ENCODE measurements at regions of chr3 and their contacts with region 1.

Region 1: DNA sequence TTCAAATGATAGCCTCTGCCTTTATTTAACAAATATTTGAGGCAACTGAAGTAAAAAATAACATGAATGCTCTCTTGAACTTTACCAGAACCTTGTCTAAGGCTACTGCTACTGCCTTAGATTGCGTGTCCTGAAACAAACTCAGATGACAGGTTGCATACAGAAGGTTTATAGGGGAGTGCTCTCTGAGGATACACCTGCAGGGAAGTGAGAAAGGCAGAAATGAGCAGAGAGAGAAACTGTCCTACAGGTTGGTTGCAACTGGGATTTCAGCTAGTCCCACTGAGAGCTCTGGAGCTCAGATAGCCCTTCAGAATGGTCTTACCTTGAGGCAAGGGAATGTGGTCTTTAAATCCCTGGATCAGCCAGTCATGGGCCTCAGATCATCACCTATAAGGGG is 165.5 kb downstream of the IL5RA start:
- DNase-seq: no peak
- ATAC-seq: no peak
- H3K4me3 Mint-ChIP-seq: no peak overlapping the region
- H3K27ac Mint-ChIP-seq: no peak overlapping the region
- H3K4me1 Mint-ChIP-seq: no peaks in the 10 kb centered on the region
- H3K27me3 Mint-ChIP-seq: peaks cover 14% of the 10 kb centered on the region

Region 2: DNA sequence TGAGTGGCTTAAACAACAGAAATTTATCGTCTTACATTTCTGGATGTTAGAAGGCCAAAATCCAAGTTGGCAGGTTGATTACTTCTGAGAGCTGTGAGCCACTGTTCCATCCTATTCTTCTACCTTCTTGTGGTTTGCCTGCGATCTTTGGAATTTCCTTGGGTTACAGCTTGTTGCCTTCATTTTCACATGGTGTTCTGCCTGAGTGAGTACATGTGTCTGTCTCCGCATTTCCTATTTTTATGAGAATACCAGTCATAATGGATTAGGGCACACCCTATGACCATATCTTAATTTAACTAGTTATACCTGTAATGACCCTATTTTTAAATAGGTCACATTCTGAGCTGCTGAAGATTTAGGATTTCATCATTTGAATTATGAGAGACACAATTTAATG is 551.6 kb before region 1 on chr3:
- CTCF ChIA-PET with region 1: no interaction called
- POLR2A ChIA-PET with region 1: interaction called, 12 read pairs
- intact Hi-C with region 1: no loop called
- DNase-seq: no peak
- ATAC-seq: no peak
- H3K4me3 Mint-ChIP-seq: no peak overlapping the region
- H3K27ac Mint-ChIP-seq: no peak overlapping the region
- H3K4me1 Mint-ChIP-seq: no peaks in the 10 kb centered on the region
- H3K27me3 Mint-ChIP-seq: no peaks in the 10 kb centered on the region

Region 3: GRCh38 chr3:2656806-2657777 is 287.5 kb before region 1 on chr3:
- CTCF ChIA-PET with region 1: no interaction called
- POLR2A ChIA-PET with region 1: no interaction called
- intact Hi-C with region 1: no loop called
- DNase-seq: no peak
- ATAC-seq: no peak
- H3K4me3 Mint-ChIP-seq: no peak overlapping the region
- H3K27ac Mint-ChIP-seq: no peak overlapping the region
- H3K4me1 Mint-ChIP-seq: no peaks in the 10 kb centered on the region
- H3K27me3 Mint-ChIP-seq: peaks cover 7% of the 10 kb centered on the region

Region 4: GRCh38 chr3:3065876-3066275 is 121.2 kb after region 1 on chr3:
- CTCF ChIA-PET with region 1: no interaction called
- POLR2A ChIA-PET with region 1: no interaction called
- intact Hi-C with region 1: no loop called
- DNase-seq: no peak
- ATAC-seq: no peak
- H3K4me3 Mint-ChIP-seq: no peak overlapping the region
- H3K27ac Mint-ChIP-seq: no peak overlapping the region
- H3K4me1 Mint-ChIP-seq: no peaks in the 10 kb centered on the region
- H3K27me3 Mint-ChIP-seq: no peaks in the 10 kb centered on the region

Measured in activated CD4-positive, alpha-beta T cell treated with anti-CD3 and anti-CD28 coated beads for 36 hours (primary cell).